Pancreas (tissue), 10 donors: ENCODE measurements at regions of chr4 and their contacts with region 1.

Region 1: DNA sequence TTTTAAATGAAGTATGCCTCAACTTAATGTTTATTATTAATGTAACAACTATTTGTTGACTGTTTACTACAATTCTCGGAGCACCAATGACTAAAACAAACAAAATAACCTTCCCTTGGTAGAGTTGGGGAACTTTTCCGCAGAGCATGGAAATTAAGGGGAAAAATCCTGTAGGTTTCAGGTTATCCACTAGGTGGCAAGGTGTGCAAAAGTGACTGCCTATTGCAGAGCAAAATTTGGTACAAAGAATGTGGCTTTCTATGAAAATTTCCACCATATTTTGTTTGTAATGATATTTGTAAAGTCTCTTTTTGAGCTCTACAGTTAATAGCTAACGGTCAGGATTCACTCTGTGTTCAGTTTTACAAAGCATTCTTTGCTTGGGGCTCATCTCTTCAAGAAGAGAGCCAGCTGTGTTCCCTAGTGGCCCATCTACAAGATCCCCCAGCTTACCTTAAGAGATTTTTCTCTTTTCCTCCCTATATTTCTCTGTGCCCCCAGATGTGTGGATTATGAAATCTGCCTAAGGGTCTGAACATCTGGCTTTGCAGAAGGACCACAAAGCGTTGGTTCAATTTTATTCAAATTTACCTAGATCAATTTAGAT is 61.1 kb downstream of the FBXO8 start:
- DNase-seq: peak in 1 of 6 donors; percentile 15
- ATAC-seq: peak in 3 of 4 donors; percentile 81 to 85 (median 82)
- H3K4me3 ChIP-seq: no peak overlapping the region
- H3K27ac ChIP-seq: no peak overlapping the region
- H3K4me1 ChIP-seq: peaks cover 5 to 10% (median 8%) of the 10 kb centered on the region in 3 donors
- H3K27me3 ChIP-seq: peaks cover 0 to 18% (median 0%) of the 10 kb centered on the region in 4 donors
- CTCF ChIP-seq: peak; percentile 39 to 60 (median 52)

Region 2: DNA sequence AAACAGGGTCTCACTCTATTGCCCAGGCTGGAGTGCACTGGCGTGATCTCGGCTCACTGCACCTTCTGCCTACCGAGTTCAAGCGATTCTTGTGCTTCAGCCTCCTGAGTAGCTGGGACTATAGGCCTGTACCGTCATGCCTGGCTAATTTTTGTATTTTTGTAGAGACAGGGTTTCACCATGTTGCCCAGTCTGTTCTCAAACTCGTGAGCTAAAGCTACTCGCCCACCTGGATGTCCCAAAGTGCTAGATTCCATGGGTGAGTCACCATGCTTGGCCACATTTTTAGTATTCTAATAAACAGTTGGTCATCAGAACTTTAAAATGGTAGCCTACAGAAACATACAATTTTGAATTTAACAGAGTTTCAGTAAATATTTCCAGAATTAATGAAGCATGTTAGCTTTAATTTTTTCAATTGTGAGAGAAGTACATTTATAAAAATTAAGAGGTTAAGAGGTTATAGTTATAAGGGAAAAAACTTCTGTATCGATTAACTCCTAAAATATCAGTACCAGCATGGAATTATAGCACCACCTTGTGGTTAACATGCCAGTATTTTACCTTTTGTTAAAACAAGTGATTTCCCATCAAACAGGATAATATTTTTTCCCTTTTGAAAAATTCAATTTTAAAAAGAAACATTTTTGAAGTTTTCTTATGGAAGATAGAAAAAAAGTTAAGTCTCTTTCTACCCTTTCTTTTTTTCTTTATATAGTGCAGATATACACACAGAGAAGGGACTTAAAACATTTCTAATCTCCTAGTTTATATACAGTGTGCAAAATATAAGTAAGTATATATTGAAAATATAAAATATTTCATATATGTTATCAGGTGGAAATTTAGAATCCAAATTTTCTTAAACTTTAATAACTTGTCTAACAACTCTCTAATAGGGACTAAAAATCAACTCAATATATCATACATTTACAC is 96.7 kb after region 1 on chr4:
- intact Hi-C with region 1: loop called in 2 of 3 experiments (anchors 5 to 10 kb)
- DNase-seq: no peak
- ATAC-seq: peak in 2 of 4 donors; percentile 46 to 53
- H3K4me3 ChIP-seq: no peak overlapping the region
- H3K27ac ChIP-seq: no peak overlapping the region
- H3K4me1 ChIP-seq: no peaks in the 10 kb centered on the region
- H3K27me3 ChIP-seq: no peaks in the 10 kb centered on the region
- CTCF ChIP-seq: peak in 3 of 4 donors; percentile 46 to 74 (median 56)

Region 3: DNA sequence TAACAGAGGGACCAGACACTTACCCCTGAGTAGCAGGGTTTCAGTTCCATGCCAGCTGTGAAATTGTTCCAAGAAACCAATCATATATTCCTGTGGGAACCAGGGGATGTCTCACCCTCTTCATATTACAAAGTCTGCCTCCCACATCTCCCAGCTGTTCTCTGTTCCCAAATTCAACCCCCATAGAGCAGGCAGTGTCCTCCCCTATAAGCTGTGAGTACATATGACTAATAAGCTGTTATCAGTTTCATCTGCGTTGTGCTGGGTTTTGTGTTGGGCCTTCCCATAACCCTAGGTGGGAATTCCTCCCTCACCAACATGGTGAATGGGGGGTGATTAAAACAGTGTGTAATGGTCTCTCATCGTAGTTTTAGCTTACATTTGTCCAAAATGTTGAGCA is 102.4 kb after region 1 on chr4:
- intact Hi-C with region 1: loop called in 2 of 3 experiments (anchors 5 to 10 kb)
- DNase-seq: no peak
- ATAC-seq: no peak
- H3K4me3 ChIP-seq: no peak overlapping the region
- H3K27ac ChIP-seq: no peak overlapping the region
- H3K4me1 ChIP-seq: no peaks in the 10 kb centered on the region
- H3K27me3 ChIP-seq: no peaks in the 10 kb centered on the region
- CTCF ChIP-seq: no peak